Activated T-helper 2 cell treated with anti-CD3 and anti-CD28 coated beads, Interferon-gamma antibody, Interleukin-2, Interleukin-4, amounts not matched to agents 10 μg/mL and 5 μg/mL and 100 μg/mL, durations not matched to agents 14 hours and 24 hours and 36 hours (primary cell): ENCODE measurements at regions of chr13 and their contacts with region 1.

Region 1: DNA sequence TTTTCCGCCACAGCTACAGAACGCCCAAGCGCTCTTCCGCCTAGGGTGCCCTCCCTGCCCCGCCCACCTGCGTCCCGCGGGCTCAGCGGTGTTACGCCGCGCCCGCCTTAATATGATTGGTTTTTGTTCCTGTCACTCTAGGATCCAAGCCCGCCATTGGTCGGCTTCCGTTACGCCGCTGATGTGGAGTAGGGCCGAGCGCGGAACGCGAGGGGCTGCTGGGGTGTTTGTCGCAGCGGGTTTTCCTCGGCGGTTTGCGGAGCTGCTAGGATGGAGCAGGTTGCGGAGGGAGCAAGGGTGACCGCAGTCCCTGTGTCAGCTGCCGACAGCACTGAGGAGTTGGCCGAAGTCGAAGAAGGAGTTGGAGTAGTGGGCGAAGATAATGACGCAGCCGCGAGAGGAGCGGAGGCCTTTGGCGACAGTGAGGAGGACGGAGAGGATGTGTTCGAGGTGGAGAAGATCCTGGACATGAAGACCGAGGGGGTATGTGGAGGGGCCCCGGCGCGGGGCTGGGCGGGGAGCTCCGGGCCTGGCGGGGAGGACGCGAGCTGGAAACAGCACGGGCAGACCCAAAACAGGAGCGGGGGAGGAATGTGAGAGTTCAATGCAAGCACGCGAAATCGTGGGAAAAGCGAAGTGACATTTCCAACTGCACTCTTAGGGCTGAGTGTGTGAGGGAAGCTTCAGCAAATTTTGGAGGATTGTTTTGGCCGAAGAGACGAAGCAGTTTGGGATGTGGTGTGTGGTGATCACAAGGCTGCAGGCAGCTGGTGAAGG is at the start of gene MPHOSPH8:
- DNase-seq: peak; percentile 91
- H3K4me3 Mint-ChIP-seq: peak within 1 kb of the TSS; percentile 99
- H3K27ac Mint-ChIP-seq: peak within 1 kb of the TSS; percentile 98
- H3K4me1 Mint-ChIP-seq: peaks cover 19% of the 10 kb centered on the region
- H3K27me3 Mint-ChIP-seq: no peaks in the 10 kb centered on the region
- total RNA-seq, gene MPHOSPH8: 43.5 and 46.4 TPM in 2 replicates

Region 2: GRCh38 chr13:19587635-19588300 is 45.9 kb before region 1 on chr13:
- intact Hi-C with region 1: loop called (anchors 1 kb)
- DNase-seq: no peak
- H3K4me3 Mint-ChIP-seq: peak overlapping the region; percentile 70
- H3K27ac Mint-ChIP-seq: peak overlapping the region; percentile 77
- H3K4me1 Mint-ChIP-seq: peaks cover 24% of the 10 kb centered on the region
- H3K27me3 Mint-ChIP-seq: peaks cover 8% of the 10 kb centered on the region

Region 3: GRCh38 chr13:19601749-19602725 is 31.6 kb before region 1 on chr13:
- intact Hi-C with region 1: no loop called
- DNase-seq: peak; percentile 16
- H3K4me3 Mint-ChIP-seq: peak overlapping the region; percentile 64
- H3K27ac Mint-ChIP-seq: no peak overlapping the region
- H3K4me1 Mint-ChIP-seq: peaks cover 6% of the 10 kb centered on the region
- H3K27me3 Mint-ChIP-seq: peaks cover 22% of the 10 kb centered on the region

Region 4: GRCh38 chr13:19782049-19782726 is 148.5 kb after region 1 on chr13:
- intact Hi-C with region 1: loop called (anchors 2 kb)
- DNase-seq: peak; percentile 62
- H3K4me3 Mint-ChIP-seq: peak overlapping the region; percentile 93
- H3K27ac Mint-ChIP-seq: peak overlapping the region; percentile 97
- H3K4me1 Mint-ChIP-seq: peaks cover 2% of the 10 kb centered on the region
- H3K27me3 Mint-ChIP-seq: peaks cover 1% of the 10 kb centered on the region